Calu3 (cell line): ENCODE measurements at regions of chr1 and their contacts with region 1.

Region 1: DNA sequence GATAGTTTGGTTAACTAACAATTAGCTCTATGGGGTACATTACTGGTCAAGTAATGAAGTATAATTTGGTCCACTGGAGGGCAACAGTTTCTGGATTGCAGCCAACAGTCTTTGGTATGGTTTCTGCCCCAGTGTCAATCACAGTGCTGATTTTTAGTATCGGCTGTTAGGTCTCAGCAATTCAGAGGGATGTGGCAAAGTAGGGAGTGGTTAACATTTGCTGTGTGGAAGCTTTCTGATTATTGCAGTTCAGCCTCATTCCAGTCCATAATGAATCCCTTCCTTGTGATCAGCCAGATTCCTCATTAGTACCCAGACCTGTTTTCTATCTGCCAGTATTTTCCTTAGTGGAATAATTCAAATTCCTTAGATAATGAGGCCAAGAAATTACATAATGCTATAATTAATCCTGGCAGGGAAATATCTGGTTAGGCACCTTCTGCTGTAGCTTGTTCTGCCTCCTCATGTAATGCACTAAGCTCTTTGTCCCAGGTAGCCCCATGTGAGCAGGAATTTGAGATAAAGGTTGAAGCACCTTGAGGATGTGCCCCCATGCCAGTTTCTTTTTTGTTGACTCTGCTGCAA is 14.0 kb downstream of the F3 start:
- DNase-seq: peak; percentile 67
- H3K4me3 Mint-ChIP-seq: peak overlapping the region; percentile 5
- H3K27ac Mint-ChIP-seq: peak overlapping the region; percentile 83
- H3K4me1 Mint-ChIP-seq: peaks cover 68% of the 10 kb centered on the region
- H3K27me3 Mint-ChIP-seq: no peaks in the 10 kb centered on the region
- CTCF ChIP-seq: no peak

Region 2: DNA sequence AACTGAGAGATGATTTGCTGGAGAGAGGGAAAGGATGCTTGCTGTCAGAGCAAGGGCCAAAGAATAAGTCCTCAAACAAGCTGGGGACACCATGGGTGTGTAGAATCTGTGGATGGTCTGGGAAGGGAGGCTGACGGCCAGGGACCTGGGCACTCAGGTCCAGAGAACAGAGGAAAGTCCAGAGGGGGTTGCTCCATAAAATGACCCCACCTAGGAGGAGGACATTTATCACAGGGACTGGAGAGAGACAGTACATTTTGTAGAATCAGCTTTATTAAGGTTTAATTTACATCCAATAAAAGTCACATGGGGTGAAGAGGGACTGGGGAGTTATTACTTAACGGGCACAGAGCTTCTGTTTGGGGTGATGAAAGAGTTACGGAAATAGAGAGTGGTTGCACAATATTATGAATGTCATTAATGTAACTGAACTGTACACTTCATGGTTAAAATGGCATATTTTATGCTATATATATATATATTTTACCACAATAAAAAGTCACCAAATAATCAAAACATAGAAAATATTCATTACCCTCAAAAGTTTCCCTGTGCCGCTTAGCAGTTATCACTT is 182.3 kb before region 1 on chr1:
- CTCF ChIA-PET with region 1: no interaction called
- intact Hi-C with region 1: no loop called
- DNase-seq: no peak
- H3K4me3 Mint-ChIP-seq: no peak overlapping the region
- H3K27ac Mint-ChIP-seq: no peak overlapping the region
- H3K4me1 Mint-ChIP-seq: no peaks in the 10 kb centered on the region
- H3K27me3 Mint-ChIP-seq: no peaks in the 10 kb centered on the region
- CTCF ChIP-seq: no peak

Region 3: GRCh38 chr1:94541175-94542087 is 13.9 kb after region 1 on chr1 and contains the start of gene F3:
- CTCF ChIA-PET with region 1: interaction called, 10 read pairs
- intact Hi-C with region 1: no loop called
- DNase-seq: peak; percentile 98
- H3K4me3 Mint-ChIP-seq: peak within 1 kb of the TSS; percentile 75
- H3K27ac Mint-ChIP-seq: peak within 1 kb of the TSS; percentile 60
- H3K4me1 Mint-ChIP-seq: peaks cover 32% of the 10 kb centered on the region
- H3K27me3 Mint-ChIP-seq: no peaks in the 10 kb centered on the region
- CTCF ChIP-seq: no peak
- total RNA-seq, gene F3: 344 and 387 TPM in 2 replicates

Region 4: GRCh38 chr1:94599095-94599813 is 71.7 kb after region 1 on chr1:
- CTCF ChIA-PET with region 1: interaction called, 10 read pairs
- intact Hi-C with region 1: loop called (anchors 5 kb)
- DNase-seq: peak; percentile 55
- H3K4me3 Mint-ChIP-seq: no peak overlapping the region
- H3K27ac Mint-ChIP-seq: peak overlapping the region; percentile 72
- H3K4me1 Mint-ChIP-seq: peaks cover 68% of the 10 kb centered on the region
- H3K27me3 Mint-ChIP-seq: no peaks in the 10 kb centered on the region
- CTCF ChIP-seq: peak; percentile 22

Region 5: GRCh38 chr1:94648225-94649007 is 120.9 kb after region 1 on chr1:
- CTCF ChIA-PET with region 1: interaction called, 3 read pairs
- intact Hi-C with region 1: loop called (anchors 5 kb)
- DNase-seq: peak; percentile 75
- H3K4me3 Mint-ChIP-seq: peak overlapping the region; percentile 7
- H3K27ac Mint-ChIP-seq: no peak overlapping the region
- H3K4me1 Mint-ChIP-seq: peaks cover 28% of the 10 kb centered on the region
- H3K27me3 Mint-ChIP-seq: no peaks in the 10 kb centered on the region
- CTCF ChIP-seq: no peak